ENCODE measurements at regions of chr6 and their contacts with region 1.

Region 1: GRCh38 chr6:34392497-34393190 is at the start of gene NUDT3:
- H3K4me3 Mint-ChIP-seq: no peak within 1 kb of the TSS
- H3K27ac Mint-ChIP-seq: no peak within 1 kb of the TSS
- H3K4me1 Mint-ChIP-seq: peaks cover 15% of the 10 kb centered on the region
- H3K27me3 Mint-ChIP-seq: no peaks in the 10 kb centered on the region

Region 2: GRCh38 chr6:34341481-34341971 is 51.1 kb before region 1 on chr6:
- intact Hi-C with region 1: no loop called
- H3K4me3 Mint-ChIP-seq: no peak overlapping the region
- H3K27ac Mint-ChIP-seq: peak overlapping the region; percentile 19
- H3K4me1 Mint-ChIP-seq: peaks cover 78% of the 10 kb centered on the region
- H3K27me3 Mint-ChIP-seq: no peaks in the 10 kb centered on the region

Region 3: DNA sequence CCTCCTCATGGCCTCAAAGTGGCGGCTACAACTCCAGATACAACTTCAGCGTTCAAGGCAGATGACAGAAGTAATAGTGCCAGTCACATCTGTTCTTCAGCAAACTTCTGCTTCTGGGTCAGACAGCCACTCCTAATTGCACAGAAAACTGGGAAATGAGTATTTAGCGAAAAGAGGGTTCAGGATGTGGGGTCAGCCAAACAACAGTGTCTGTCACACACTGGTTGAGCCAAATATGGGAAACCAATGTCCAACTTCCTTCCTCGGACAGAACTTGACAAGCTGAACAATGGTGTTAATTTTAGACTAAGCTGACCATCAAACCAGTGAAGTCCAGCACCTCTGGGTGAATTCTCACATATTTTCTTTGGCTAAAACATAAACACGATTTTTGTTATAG is 22.3 kb before region 1 on chr6:
- intact Hi-C with region 1: loop called (anchors 2 kb)
- H3K4me3 Mint-ChIP-seq: no peak overlapping the region
- H3K27ac Mint-ChIP-seq: peak overlapping the region; percentile 80
- H3K4me1 Mint-ChIP-seq: peaks cover 45% of the 10 kb centered on the region
- H3K27me3 Mint-ChIP-seq: no peaks in the 10 kb centered on the region

Region 4: GRCh38 chr6:35181933-35182612 is 789.4 kb after region 1 on chr6:
- intact Hi-C with region 1: no loop called
- H3K4me3 Mint-ChIP-seq: no peak overlapping the region
- H3K27ac Mint-ChIP-seq: no peak overlapping the region
- H3K4me1 Mint-ChIP-seq: no peaks in the 10 kb centered on the region
- H3K27me3 Mint-ChIP-seq: peaks cover 16% of the 10 kb centered on the region